Transverse colon (tissue), 4 donors: ENCODE measurements at regions of chr17 and their contacts with region 1.

Region 1: DNA sequence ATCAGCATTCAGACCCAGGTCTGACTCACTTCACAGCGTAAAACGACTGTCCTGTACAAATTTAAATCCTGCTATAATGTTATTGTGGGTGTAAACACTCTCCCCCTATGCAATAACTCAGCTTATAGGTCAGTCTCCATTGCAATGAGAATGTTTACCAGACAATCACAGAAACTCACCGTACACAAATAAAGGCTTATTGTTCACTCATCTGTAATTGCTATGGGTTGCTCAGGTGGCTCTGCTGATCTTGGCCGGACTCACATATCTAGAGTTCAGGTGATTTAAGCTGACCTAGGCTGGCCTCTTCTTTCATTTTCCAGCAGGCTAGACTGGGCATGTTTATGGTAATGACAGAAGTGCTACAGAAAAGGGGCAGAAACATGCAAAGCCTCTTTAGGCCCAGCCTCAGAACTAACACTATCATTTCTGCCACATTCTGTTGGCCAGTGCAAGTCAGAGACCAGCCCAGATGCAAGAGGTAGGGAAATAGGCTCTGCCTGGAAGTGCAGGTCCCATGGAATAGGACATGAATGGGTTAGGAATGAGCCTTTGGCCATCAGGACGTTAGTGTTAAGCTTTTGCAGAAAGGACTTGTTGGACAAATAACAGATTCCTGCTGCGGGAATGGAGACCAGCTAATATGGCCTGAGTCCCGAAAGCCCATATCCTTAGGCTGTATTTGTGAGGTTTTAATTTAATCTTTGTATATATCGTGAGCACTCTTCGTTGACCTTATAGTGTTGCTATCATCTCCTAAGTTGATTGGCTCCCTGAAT is 44.0 kb downstream of the HLF start:
- DNase-seq: no peak
- H3K4me3 ChIP-seq: no peak overlapping the region
- H3K27ac ChIP-seq: no peak overlapping the region
- H3K4me1 ChIP-seq: peaks cover 0 to 3% (median 1%) of the 10 kb centered on the region in 4 donors
- H3K27me3 ChIP-seq: no peaks in the 10 kb centered on the region
- CTCF ChIP-seq: no peak
- EP300 ChIP-seq: no peak
- POLR2A ChIP-seq: no peak

Region 2: DNA sequence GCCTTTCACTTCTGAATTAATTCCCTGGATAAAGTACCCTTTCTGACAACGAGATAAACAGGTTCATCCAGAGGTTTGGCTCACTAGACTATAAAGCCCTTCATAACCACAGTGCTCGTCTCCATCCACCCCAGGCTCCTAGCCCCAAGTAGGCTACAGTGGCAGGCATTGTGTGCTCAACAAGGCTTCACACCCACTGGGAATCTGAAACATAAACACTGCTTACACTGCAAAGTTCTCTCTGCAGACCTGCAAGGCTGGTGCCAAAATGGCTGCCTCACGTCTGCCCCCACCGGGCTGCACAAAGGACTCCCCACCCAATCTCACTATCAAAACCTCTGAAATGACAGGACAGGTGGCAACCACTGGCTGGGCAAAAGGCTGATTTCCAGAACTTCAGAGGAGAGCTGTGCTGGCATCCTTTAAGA is 49.1 kb before region 1 on chr17:
- in situ Hi-C with region 1: no loop called
- intact Hi-C with region 1: loop called (anchors 5 kb)
- DNase-seq: no peak
- H3K4me3 ChIP-seq: no peak overlapping the region
- H3K27ac ChIP-seq: no peak overlapping the region
- H3K4me1 ChIP-seq: peaks cover 8 to 14% (median 12%) of the 10 kb centered on the region in 4 donors
- H3K27me3 ChIP-seq: peaks cover 44% of the 10 kb centered on the region
- CTCF ChIP-seq: no peak
- EP300 ChIP-seq: no peak
- POLR2A ChIP-seq: no peak